ENCODE measurements at regions of chr11 and their contacts with region 1.

Region 1: GRCh38 chr11:10307442-10308207 is 2.8 kb downstream of the ADM start:
- DNase-seq: peak; percentile 97

Region 2: GRCh38 chr11:9757809-9758636 is 549.6 kb before region 1 on chr11:
- in situ Hi-C with region 1: loop called (anchors 25 kb)
- DNase-seq: peak; percentile 86

Region 3: DNA sequence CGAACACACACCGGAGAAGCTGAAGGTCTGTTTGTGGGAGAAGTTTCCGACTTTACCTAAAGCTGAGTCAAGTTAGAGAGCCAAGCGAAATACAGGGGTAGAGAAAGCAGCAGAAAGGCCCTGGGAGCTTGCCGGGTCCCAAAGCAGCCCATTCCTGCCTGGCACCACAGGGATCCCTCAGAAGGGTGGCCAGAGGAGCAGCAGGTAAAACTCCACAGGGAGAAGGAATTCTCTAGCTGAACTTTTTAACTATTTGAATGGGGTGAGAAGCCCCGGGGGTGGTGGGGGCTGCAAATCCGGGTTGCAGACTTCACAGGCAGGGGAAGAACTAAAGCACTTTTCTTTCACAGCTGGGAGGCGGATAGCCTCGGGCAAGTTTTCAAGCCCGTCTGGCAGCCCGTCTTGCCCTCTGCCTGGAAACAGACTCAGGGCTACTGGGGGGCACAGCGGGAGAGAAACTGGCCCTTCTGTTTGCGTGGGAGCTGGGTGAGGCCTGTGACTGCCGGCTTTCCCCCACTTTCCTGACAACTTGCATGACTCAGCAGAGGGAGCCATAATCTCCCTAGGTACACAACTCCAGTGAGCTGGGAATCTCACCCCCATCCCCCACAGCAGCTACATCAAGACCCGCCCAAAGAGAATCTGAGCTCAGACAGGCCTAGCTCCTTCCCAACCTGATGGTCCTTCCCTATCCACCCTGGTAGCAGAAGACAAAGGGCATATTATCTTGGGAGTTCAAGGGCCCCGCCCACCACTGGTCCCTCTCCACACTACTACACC is 324.6 kb before region 1 on chr11:
- in situ Hi-C with region 1: loop called (anchors 25 kb)
- DNase-seq: no peak